CD4-positive, alpha-beta memory T cell (primary cell): ENCODE measurements at regions of chr4 and their contacts with region 1.

Region 1: DNA sequence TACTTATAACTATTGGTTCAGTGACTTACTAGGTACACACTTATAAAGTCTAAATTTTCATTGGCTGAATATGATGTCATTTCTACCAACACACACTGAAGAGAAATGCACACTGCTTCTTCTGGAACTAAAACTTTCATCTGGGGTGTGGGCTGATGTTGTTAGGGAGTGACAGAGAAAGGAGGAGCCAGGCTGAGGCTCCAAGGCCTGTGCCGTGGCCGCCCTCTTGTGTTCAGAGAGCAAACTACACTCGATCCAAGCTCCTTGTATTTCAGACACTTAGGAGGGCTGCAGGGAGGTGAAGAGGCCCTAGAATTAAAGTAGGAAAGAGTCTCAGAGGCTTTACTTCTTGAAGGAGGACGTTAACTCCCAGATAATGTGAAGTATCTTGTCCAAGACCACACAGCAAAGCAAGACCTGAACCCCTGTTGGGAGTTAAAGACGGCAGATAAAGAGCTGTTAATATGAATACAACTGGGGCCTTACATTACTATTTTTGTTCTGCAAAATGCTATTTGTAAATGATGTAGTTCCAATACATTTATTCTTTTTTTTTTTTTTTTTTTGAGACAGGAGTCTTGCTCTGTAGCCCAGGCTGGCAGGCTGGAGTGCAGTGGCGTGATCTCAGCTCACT is 137.5 kb downstream of the AFAP1 start:
- DNase-seq: peak; percentile 72 to 77 (median 75)
- H3K4me3 ChIP-seq: no peak overlapping the region
- H3K4me3 Mint-ChIP-seq: no peak overlapping the region
- H3K27ac ChIP-seq: no peak overlapping the region
- H3K27ac Mint-ChIP-seq: peak overlapping the region in 5 of 7 donors; percentile 3 to 37 (median 19)
- H3K4me1 ChIP-seq: peaks cover 11% of the 10 kb centered on the region
- H3K4me1 Mint-ChIP-seq: peaks cover 6 to 19% (median 11%) of the 10 kb centered on the region in 4 donors
- H3K27me3 ChIP-seq: no peaks in the 10 kb centered on the region
- H3K27me3 Mint-ChIP-seq: no peaks in the 10 kb centered on the region

Region 2: DNA sequence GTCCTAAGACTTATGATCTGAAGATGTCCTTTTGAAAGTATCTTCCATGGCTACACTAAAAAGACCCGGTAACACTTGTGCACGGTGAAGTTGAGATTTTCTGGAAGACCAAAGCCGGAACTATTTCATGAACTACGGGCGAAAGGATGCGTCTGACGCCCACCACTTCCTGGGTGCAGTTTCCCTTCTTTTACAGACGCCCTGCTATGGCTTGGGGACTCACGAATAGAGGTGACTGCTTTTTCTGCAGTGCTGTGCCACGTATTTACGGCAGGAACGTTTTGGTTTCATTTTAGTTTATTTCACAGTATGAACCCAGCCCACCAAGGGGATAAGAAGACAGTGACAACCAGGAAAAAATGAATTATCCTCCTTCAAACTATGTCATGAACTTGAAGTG is 43.0 kb before region 1 on chr4:
- CTCF ChIA-PET with region 1: interaction called, 9 read pairs
- POLR2A ChIA-PET with region 1: interaction called, 3 read pairs
- intact Hi-C with region 1: loop called (anchors 1 kb)
- DNase-seq: peak; percentile 74 to 87 (median 78)
- H3K4me3 ChIP-seq: peak overlapping the region in 1 of 2 donors; percentile 66
- H3K4me3 Mint-ChIP-seq: peak overlapping the region; percentile 74 to 95 (median 88)
- H3K27ac ChIP-seq: peak overlapping the region; percentile 78
- H3K27ac Mint-ChIP-seq: peak overlapping the region; percentile 89 to 99 (median 96)
- H3K4me1 ChIP-seq: peaks cover 34% of the 10 kb centered on the region
- H3K4me1 Mint-ChIP-seq: peaks cover 19 to 44% (median 29%) of the 10 kb centered on the region in 4 donors
- H3K27me3 ChIP-seq: no peaks in the 10 kb centered on the region
- H3K27me3 Mint-ChIP-seq: no peaks in the 10 kb centered on the region

Region 3: DNA sequence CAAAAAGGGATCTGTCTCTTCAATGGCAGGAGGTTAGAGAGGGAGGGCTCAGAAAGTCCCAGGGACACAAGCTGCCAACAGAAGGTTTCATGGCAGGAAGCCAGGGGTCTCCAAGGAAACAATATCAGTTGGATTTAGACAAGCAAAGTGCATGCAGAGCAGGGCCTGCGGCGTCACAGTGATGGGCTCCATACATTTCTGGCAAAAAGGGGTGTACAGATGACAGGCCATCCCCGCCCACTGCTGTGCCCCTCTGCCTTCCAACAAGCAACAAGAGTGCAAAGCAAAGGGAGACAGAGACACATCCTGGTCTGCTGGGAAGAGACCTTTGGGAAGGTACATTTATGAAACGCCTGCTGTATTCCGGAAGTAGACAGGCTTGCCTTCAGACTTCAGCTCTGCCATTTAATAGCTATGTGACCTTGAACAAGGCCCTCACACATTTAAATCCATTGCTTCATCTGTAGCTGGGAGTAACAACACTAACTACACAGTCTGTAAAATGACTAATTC is 16.2 kb after region 1 on chr4:
- CTCF ChIA-PET with region 1: interaction called, 16 read pairs
- POLR2A ChIA-PET with region 1: no interaction called
- intact Hi-C with region 1: no loop called
- DNase-seq: no peak
- H3K4me3 ChIP-seq: no peak overlapping the region
- H3K4me3 Mint-ChIP-seq: no peak overlapping the region
- H3K27ac ChIP-seq: no peak overlapping the region
- H3K27ac Mint-ChIP-seq: no peak overlapping the region
- H3K4me1 ChIP-seq: no peaks in the 10 kb centered on the region
- H3K4me1 Mint-ChIP-seq: peaks cover 0 to 10% (median 2%) of the 10 kb centered on the region in 4 donors
- H3K27me3 ChIP-seq: no peaks in the 10 kb centered on the region
- H3K27me3 Mint-ChIP-seq: no peaks in the 10 kb centered on the region

Region 4: DNA sequence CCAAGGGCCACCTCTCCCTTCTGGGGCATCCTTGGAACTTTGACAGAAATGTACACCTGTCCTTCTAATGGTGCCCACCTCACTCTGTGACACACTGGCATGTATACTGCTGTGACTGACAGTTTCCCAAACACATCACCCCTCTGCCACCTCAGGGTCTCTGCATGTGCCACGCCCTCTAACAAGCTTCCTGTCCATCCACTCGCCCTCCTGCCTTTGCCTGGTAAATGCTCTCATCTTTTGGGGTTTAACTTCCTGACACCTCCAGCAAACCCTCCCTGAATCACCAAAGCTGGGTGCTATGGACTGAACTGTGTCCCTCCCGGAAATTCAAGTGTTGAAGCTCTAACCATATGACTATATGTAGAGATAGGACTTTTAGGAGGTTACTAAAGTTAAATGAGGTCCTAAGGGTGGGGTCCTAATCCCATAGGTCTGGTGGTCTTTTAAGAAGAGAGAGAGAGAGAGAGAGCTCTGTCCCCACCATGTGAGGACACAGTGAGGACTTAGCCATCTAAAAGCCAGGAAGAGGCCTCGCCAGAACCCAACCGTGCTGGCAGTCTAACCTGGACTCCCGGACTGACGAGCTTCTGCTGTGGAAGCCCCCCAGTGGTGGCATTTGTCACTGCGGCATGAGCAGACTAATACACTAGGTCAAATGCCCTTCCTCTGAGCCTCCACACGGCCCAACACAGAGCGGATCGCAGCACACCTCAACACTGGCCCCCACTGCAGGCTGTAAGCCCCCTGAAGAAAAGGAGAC is 41.8 kb after region 1 on chr4:
- CTCF ChIA-PET with region 1: interaction called, 123 read pairs
- POLR2A ChIA-PET with region 1: interaction called, 7 read pairs
- intact Hi-C with region 1: loop called (anchors 1 kb)
- DNase-seq: peak; percentile 54 to 72 (median 58)
- H3K4me3 ChIP-seq: no peak overlapping the region
- H3K4me3 Mint-ChIP-seq: peak overlapping the region in 1 of 8 donors; percentile 29
- H3K27ac ChIP-seq: no peak overlapping the region
- H3K27ac Mint-ChIP-seq: peak overlapping the region in 6 of 7 donors; percentile 33 to 94 (median 74)
- H3K4me1 ChIP-seq: peaks cover 19% of the 10 kb centered on the region
- H3K4me1 Mint-ChIP-seq: peaks cover 20 to 41% (median 32%) of the 10 kb centered on the region in 4 donors
- H3K27me3 ChIP-seq: no peaks in the 10 kb centered on the region
- H3K27me3 Mint-ChIP-seq: no peaks in the 10 kb centered on the region

Region 5: DNA sequence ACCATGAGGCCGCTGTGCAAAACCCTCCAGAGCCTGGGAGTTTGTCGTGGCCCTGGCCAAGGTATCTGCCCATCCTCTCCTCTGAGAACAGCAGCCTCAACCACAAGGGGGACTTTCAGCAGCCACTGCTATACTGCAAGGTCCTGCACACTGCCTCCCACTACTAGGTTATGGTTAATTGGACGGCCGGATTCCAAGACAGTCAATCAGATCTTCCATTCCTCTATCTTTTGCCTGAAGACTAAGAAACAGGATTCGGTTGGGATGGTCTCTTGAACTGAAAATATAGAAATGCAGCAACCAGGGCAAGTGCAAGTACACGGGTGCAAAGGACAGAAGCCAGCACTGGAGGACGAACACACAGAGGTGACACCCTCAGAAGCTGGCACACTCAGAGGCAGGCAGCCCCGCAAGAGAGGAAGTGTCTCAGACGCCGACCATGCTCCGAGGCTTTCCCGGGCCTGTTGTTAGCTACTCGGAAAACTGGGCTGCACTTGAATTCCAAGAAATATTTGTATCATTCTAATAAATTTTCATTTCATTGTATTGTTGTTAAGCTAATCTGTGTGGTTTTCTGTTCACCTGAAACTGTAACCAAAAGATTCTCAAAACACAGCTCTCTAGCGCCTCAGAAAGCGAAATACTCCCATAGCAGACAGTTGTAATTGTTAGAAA is 74.1 kb after region 1 on chr4:
- CTCF ChIA-PET with region 1: interaction called, 87 read pairs
- POLR2A ChIA-PET with region 1: interaction called, 6 read pairs
- intact Hi-C with region 1: loop called (anchors 1 kb)
- DNase-seq: peak; percentile 30 to 45 (median 36)
- H3K4me3 ChIP-seq: peak overlapping the region in 1 of 2 donors; percentile 33
- H3K4me3 Mint-ChIP-seq: peak overlapping the region; percentile 61 to 94 (median 82)
- H3K27ac ChIP-seq: peak overlapping the region; percentile 44
- H3K27ac Mint-ChIP-seq: peak overlapping the region; percentile 67 to 96 (median 91)
- H3K4me1 ChIP-seq: peaks cover 42% of the 10 kb centered on the region
- H3K4me1 Mint-ChIP-seq: peaks cover 38 to 67% (median 58%) of the 10 kb centered on the region in 4 donors
- H3K27me3 ChIP-seq: no peaks in the 10 kb centered on the region
- H3K27me3 Mint-ChIP-seq: no peaks in the 10 kb centered on the region

Region 6: DNA sequence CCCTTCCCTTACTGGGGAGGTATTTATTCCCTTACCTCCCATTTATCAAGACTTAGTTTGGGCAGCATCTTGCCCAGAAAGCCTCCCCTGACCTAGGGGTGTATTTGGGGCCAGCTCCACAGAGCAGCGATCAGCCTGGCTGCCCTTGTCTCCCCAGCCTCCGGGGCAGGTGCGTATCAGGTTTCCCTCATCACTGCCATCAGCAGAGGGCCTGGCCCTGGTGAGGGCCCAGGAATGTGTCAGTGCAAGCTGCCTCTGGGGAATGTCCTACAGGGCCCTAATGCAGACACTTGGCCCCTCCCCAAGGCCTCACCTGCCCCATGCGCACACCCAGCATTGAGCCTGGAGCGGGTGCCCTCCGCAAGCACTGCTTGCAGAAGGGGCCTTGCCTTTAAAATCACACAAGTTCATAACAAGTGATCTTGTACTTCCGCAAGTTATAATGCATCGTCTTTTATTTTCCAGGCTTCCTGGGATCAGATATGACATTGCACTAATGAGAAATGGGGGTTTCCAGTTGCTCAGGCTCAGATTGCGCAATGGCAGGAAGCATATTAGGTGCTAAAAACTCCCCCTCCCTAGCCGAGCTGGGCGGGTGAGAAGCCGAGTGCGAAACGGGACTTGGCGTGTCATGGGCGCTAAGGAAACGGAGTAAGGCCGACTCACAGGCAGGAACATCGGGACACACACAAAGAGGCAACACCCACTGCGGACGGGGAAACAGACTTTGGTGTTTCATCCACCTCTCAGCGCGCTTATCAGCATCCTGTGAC is 162.9 kb after region 1 on chr4:
- CTCF ChIA-PET with region 1: interaction called, 11 read pairs
- POLR2A ChIA-PET with region 1: no interaction called
- intact Hi-C with region 1: loop called (anchors 1 kb)
- DNase-seq: peak; percentile 41 to 90 (median 60)
- H3K4me3 ChIP-seq: no peak overlapping the region
- H3K4me3 Mint-ChIP-seq: peak overlapping the region; percentile 46 to 86 (median 65)
- H3K27ac ChIP-seq: peak overlapping the region; percentile 66
- H3K27ac Mint-ChIP-seq: peak overlapping the region; percentile 88 to 97 (median 93)
- H3K4me1 ChIP-seq: peaks cover 60% of the 10 kb centered on the region
- H3K4me1 Mint-ChIP-seq: peaks cover 30 to 72% (median 52%) of the 10 kb centered on the region in 4 donors
- H3K27me3 ChIP-seq: no peaks in the 10 kb centered on the region
- H3K27me3 Mint-ChIP-seq: no peaks in the 10 kb centered on the region